SK-N-SH (cell line): ENCODE measurements at regions of chr1 and their contacts with region 1.

Region 1: GRCh38 chr1:116139592-116140134 is 28.5 kb downstream of the MAB21L3 start:
- DNase-seq: no peak
- H3K4me3 ChIP-seq: no peak overlapping the region
- H3K27ac ChIP-seq: no peak overlapping the region
- H3K4me1 ChIP-seq: peaks cover 0 to 3% of the 10 kb centered on the region in 2 experiments; a peak in 1 of 4 replicates
- H3K27me3 ChIP-seq: no peaks in the 10 kb centered on the region
- CTCF ChIP-seq: no peak
- EP300 ChIP-seq: no peak
- RAD21 ChIP-seq: no peak

Region 2: DNA sequence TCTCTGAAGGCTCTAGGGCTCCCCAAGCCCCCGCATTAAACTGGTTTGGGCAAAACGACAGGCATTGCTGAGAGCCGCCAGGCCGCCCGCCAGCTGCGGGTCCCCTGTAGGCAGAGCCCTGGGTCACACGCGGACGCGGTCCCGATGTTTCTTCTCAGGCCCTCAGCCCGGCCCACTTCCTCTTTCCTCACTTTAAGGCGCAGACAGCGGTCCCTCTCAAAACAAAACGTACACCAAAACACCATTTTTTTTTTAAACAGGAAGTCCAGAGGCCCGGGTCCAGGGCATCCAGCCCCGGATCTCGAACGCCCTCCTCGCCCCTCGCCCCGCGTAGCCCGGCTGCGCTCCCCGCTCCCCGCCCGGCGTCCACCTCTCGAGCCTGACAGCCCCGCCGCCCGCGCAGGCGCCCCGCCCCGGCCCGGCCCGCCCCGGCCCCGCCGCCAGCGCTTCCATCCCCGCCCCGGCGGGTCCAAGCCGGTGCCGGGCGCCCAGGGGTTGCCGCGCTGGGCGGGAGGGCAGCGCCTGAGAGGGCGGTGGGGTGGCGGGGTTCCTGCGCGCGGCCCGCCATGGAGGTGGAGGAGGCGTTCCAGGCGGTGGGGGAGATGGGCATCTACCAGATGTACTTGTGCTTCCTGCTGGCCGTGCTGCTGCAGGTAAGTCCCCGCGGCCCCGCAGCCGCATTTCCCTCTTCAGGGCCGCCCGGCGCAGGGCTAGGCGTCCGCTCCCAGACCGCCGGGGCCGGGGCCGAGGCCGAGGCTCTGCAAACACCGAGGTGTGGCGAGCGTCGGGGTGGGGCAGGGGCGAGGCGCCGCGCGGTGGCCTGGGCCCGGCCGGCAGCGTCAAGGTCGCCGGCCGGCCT is 163.4 kb before region 1 on chr1 and contains the start of gene SLC22A15:
- CTCF ChIA-PET with region 1: no interaction called
- POLR2A ChIA-PET with region 1: no interaction called
- DNase-seq: peak; percentile 86
- H3K4me3 ChIP-seq: peak within 1 kb of the TSS; percentile 62 to 64
- H3K27ac ChIP-seq: peak within 1 kb of the TSS in 1 of 2 experiments; percentile 34; a peak in 1 of 4 replicates
- H3K4me1 ChIP-seq: peaks cover 0 to 4% of the 10 kb centered on the region in 2 experiments; a peak in 1 of 4 replicates
- H3K27me3 ChIP-seq: peaks cover 8% of the 10 kb centered on the region; the same call in 1 of the 2 replicates
- CTCF ChIP-seq: no peak
- EP300 ChIP-seq: no peak
- RAD21 ChIP-seq: no peak
- polyA plus RNA-seq, gene SLC22A15: 0.13 and 0.41 TPM in 2 replicates

Region 3: GRCh38 chr1:116110567-116111523 is 28.8 kb before region 1 on chr1 and contains the start of gene MAB21L3:
- CTCF ChIA-PET with region 1: interaction called, 17 read pairs
- POLR2A ChIA-PET with region 1: no interaction called
- DNase-seq: no peak
- H3K4me3 ChIP-seq: no peak within 1 kb of the TSS
- H3K27ac ChIP-seq: no peak within 1 kb of the TSS
- H3K4me1 ChIP-seq: peaks cover 6% of the 10 kb centered on the region in 2 experiments; a peak in 3 of 4 replicates
- H3K27me3 ChIP-seq: no peaks in the 10 kb centered on the region
- CTCF ChIP-seq: no peak
- EP300 ChIP-seq: no peak
- RAD21 ChIP-seq: no peak
- polyA plus RNA-seq, gene MAB21L3: not detected in 2 replicates

Region 4: GRCh38 chr1:116151739-116152576 is 12.3 kb after region 1 on chr1:
- CTCF ChIA-PET with region 1: interaction called, 101 read pairs
- POLR2A ChIA-PET with region 1: no interaction called
- DNase-seq: peak; percentile 96
- H3K4me3 ChIP-seq: peak overlapping the region; percentile 50 to 51; a peak in 3 of 4 replicates
- H3K27ac ChIP-seq: peak overlapping the region in 1 of 2 experiments; percentile 60; a peak in 1 of 4 replicates
- H3K4me1 ChIP-seq: peaks cover 2 to 4% of the 10 kb centered on the region in 2 experiments; a peak in 2 of 4 replicates
- H3K27me3 ChIP-seq: no peaks in the 10 kb centered on the region
- CTCF ChIP-seq: peak; percentile 75
- EP300 ChIP-seq: no peak
- RAD21 ChIP-seq: peak; percentile 78

Region 5: DNA sequence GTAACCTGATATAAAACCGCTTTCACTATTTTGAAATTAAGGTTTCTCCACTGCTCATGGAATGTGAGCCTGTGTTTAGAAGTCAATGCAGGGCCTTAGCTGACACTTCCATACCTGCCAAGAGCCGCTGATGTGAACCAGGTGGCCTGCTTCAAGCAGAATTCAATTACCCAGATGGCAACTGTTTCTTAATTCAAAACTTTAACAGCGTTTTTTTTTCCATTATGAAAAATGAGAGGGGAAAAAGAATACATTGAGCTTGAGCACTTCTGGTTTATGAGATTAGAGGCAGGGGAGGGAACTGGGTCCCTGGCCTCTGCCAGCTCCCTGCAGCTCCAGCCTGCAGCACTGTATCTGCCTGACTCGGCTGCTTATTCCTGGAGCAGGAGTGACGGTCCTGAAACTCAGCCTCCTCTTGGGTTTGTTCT is 225.7 kb after region 1 on chr1:
- CTCF ChIA-PET with region 1: interaction called, 16 read pairs
- POLR2A ChIA-PET with region 1: no interaction called
- DNase-seq: peak; percentile 78
- H3K4me3 ChIP-seq: peak overlapping the region in 1 of 2 experiments; percentile 21; a peak in 2 of 4 replicates
- H3K27ac ChIP-seq: peak overlapping the region in 1 of 2 experiments; percentile 91; a peak in 2 of 4 replicates
- H3K4me1 ChIP-seq: peaks cover 13 to 29% of the 10 kb centered on the region in 2 experiments; a peak in 3 of 4 replicates
- H3K27me3 ChIP-seq: no peaks in the 10 kb centered on the region
- CTCF ChIP-seq: no peak
- EP300 ChIP-seq: peak in 1 of 2 experiments; percentile 95; a peak in 2 of 4 replicates
- RAD21 ChIP-seq: peak; percentile 16; the same call in 1 of the 2 replicates

Region 6: GRCh38 chr1:116418091-116418830 is 278.6 kb after region 1 on chr1:
- CTCF ChIA-PET with region 1: interaction called, 34 read pairs
- POLR2A ChIA-PET with region 1: interaction called, 4 read pairs
- DNase-seq: peak; percentile 89
- H3K4me3 ChIP-seq: peak overlapping the region; percentile 80 to 90
- H3K27ac ChIP-seq: peak overlapping the region in 1 of 2 experiments; percentile 90; a peak in 3 of 4 replicates
- H3K4me1 ChIP-seq: peaks cover 7 to 24% of the 10 kb centered on the region in 2 experiments; a peak in 3 of 4 replicates
- H3K27me3 ChIP-seq: no peaks in the 10 kb centered on the region
- CTCF ChIP-seq: no peak
- EP300 ChIP-seq: no peak; a peak in 1 of 4 replicates
- RAD21 ChIP-seq: no peak; the same call in 1 of the 2 replicates

Region 7: GRCh38 chr1:116514708-116515525 is 375.3 kb after region 1 on chr1:
- CTCF ChIA-PET with region 1: interaction called, 1,099 read pairs
- POLR2A ChIA-PET with region 1: no interaction called
- DNase-seq: no peak
- H3K4me3 ChIP-seq: no peak overlapping the region
- H3K27ac ChIP-seq: peak overlapping the region in 1 of 2 experiments; percentile 91; a peak in 3 of 4 replicates
- H3K4me1 ChIP-seq: peaks cover 0 to 39% of the 10 kb centered on the region in 2 experiments; a peak in 2 of 4 replicates
- H3K27me3 ChIP-seq: no peaks in the 10 kb centered on the region
- CTCF ChIP-seq: no peak
- EP300 ChIP-seq: no peak
- RAD21 ChIP-seq: no peak